Heart right ventricle (tissue), 16 donors: ENCODE measurements at regions of chr16 and their contacts with region 1.

Region 1: GRCh38 chr16:22190776-22191531 is 15.1 kb upstream of the EEF2K start:
- DNase-seq: peak; percentile 99 to 100
- ATAC-seq: peak; percentile 72 to 90 (median 86)
- H3K4me3 ChIP-seq: peak overlapping the region; percentile 16 to 86 (median 74)
- H3K27ac ChIP-seq: peak overlapping the region; percentile 91 to 98 (median 96)
- H3K4me1 ChIP-seq: peaks cover 8 to 47% (median 36%) of the 10 kb centered on the region in 9 donors
- H3K27me3 ChIP-seq: no peaks in the 10 kb centered on the region
- CTCF ChIP-seq: no peak

Region 2: DNA sequence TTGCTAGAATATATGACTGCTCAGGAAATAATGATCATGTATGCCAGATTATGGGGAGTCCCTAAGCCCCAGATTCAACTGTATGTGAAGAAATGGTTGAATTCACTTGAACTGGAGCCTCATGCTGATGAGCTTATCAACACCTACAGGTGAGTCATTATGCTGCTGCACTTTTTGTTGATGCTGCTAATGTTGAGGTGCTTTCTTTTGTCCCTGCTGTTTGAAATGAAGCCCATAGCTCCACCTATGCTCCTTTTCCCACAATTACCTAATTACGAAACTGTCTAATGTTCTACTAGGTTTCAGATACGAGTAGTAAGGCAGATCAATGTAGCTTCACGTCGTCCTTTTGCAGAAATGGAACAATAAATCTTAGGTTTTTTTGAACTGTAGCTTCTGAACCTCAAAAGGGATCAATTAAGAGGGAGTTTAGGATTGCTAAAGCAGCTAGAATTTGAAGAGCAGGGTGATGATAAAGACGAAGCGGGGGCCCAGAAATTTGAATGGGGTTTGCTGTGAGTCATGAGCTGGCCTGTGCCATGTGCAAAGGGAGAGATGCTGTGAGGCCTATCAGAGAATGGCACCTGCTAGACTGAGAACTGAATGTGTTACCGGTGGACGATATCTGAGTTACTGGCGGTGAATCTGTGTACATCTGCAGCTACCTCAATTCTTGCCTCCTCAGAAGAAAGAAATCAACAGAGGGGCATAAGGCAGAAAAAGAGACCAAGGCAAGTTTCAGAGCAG is 243.9 kb before region 1 on chr16:
- intact Hi-C with region 1: loop called in 6 of 10 experiments (anchors 2 to 10 kb)
- DNase-seq: no peak
- ATAC-seq: no peak
- H3K4me3 ChIP-seq: no peak overlapping the region
- H3K27ac ChIP-seq: no peak overlapping the region
- H3K4me1 ChIP-seq: peaks cover 0 to 27% (median 21%) of the 10 kb centered on the region in 9 donors
- H3K27me3 ChIP-seq: no peaks in the 10 kb centered on the region
- CTCF ChIP-seq: no peak

Region 3: GRCh38 chr16:22001591-22001990 is 189.4 kb before region 1 on chr16:
- intact Hi-C with region 1: loop called (anchors 1 to 5 kb)
- DNase-seq: no peak
- ATAC-seq: peak in 1 of 8 donors; percentile 41
- H3K4me3 ChIP-seq: no peak overlapping the region
- H3K27ac ChIP-seq: no peak overlapping the region
- H3K4me1 ChIP-seq: peaks cover 3 to 37% (median 15%) of the 10 kb centered on the region in 9 donors
- H3K27me3 ChIP-seq: no peaks in the 10 kb centered on the region
- CTCF ChIP-seq: no peak

Region 4: GRCh38 chr16:22077700-22078313 is 113.1 kb before region 1 on chr16:
- intact Hi-C with region 1: loop called in 3 of 10 experiments (anchors 10 kb)
- DNase-seq: peak; percentile 37 to 67
- ATAC-seq: peak in 6 of 8 donors; percentile 38 to 70 (median 54)
- H3K4me3 ChIP-seq: no peak overlapping the region
- H3K27ac ChIP-seq: no peak overlapping the region
- H3K4me1 ChIP-seq: peaks cover 0 to 12% (median 3%) of the 10 kb centered on the region in 9 donors
- H3K27me3 ChIP-seq: no peaks in the 10 kb centered on the region
- CTCF ChIP-seq: peak; percentile 76 to 91 (median 83)

Region 5: DNA sequence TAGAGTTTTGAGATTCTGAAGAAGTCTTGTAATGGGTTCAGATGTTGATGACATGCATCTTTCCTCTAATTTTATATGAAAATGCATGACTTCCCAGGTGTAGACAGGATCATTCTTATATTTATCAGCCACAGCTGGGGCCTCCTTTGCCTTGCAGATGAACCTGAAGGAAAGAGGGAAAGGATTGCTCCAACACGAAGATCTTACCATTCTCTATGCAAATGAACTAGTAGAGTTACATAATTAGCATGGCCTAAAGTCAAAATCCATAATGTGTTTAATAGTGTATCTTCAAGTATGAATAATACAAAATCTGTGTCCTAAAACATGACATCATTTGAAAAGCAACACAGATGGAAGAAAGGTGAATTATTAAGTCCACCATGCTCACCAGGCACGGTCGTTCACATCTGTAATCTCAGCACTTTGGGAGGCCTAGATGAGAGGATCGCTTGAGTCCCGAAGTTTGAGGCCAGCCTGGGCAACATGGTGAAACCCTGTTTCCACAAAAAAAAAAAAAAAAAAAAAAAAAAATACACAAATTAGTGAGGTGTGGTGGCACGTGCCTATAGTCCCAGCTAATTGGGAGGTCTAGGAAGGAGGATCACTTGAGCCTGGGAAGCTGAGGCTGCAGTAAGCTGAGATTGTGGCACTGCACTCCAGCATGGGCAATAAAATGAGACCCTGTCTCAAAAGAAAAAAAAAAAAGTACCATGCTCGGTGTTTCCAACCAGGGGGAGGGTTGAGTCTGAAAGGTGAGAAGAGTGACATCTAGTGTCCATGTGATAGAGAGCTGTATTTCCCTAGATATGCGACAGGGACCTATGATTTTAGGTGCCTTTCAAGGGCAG is 92.3 kb before region 1 on chr16:
- intact Hi-C with region 1: loop called in 3 of 10 experiments (anchors 5 to 10 kb)
- DNase-seq: peak in 1 of 2 donors; percentile 12
- ATAC-seq: peak in 7 of 8 donors; percentile 42 to 76 (median 66)
- H3K4me3 ChIP-seq: no peak overlapping the region
- H3K27ac ChIP-seq: no peak overlapping the region
- H3K4me1 ChIP-seq: peaks cover 0 to 2% (median 0%) of the 10 kb centered on the region in 9 donors
- H3K27me3 ChIP-seq: peaks cover 0 to 7% (median 0%) of the 10 kb centered on the region in 7 donors
- CTCF ChIP-seq: peak in 8 of 9 donors; percentile 33 to 74 (median 60)

Region 6: DNA sequence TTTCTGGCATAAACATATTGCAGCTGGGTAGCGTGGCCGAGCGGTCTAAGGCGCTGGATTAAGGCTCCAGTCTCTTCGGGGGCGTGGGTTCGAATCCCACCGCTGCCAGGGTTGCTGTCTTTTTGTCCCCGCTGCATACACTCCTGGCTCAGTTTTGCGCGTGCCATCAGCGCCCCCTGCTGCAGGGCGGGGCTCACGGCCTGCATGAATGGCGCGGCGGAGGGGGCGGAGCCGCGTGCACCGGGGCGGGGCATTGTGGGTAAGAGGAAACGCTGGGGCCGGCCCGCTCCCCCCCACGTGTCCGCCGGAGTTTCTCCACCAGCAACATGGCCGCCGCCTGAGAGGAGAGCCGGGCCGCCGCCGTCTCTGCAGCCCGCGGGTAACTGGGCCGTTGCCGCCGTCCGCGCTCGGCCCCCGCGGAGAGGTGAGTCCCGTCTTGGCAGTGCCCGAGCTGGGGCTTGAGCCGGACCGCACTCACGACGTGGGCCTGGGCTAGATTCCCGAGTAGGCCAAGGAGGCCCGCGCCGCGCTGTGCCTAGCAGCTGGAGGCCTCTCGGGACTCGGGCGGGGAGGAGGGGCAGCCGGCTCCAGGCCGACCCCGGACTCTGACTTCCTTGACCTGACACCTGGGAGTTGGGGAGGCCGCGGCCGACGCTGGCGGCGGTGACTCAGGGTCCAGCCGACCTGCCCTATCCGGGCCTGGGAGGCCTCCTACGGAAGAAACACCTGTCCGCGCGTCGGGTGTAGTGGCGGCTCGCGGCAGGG is 106.3 kb after region 1 on chr16 and contains the start of gene POLR3E:
- intact Hi-C with region 1: loop called in 8 of 10 experiments (anchors 1 to 5 kb)
- DNase-seq: peak; percentile 99 to 100
- ATAC-seq: peak; percentile 95 to 97 (median 97)
- H3K4me3 ChIP-seq: peak within 1 kb of the TSS; percentile 58 to 99 (median 87)
- H3K27ac ChIP-seq: peak within 1 kb of the TSS; percentile 61 to 96 (median 92)
- H3K4me1 ChIP-seq: peaks cover 0 to 35% (median 23%) of the 10 kb centered on the region in 9 donors
- H3K27me3 ChIP-seq: no peaks in the 10 kb centered on the region
- CTCF ChIP-seq: peak; percentile 90 to 98 (median 96)
- total RNA-seq, gene POLR3E: 27.8 to 40.7 (median 31.7) TPM